ENCODE measurements at regions of chr6 and their contacts with region 1.

Region 1: DNA sequence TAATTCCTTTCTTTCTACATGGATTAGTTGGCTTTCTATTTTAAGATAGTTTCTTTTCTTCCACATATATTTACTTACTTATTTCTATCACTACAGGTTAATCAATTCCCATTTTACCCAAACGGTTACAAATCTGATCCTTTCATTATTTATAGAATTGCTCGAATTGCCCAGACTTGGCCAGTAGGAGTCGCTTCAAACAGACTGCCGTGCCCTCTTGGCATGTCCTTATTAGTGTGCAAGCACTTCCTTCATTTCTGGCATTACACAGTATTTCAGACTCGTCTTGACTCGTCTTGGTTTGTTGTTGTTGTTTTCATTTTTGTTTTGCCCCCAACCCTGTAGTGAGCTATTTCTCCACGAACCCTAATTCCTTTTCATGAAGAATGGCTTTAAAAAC is 74.6 kb downstream of the SAMD3 start:
- DNase-seq: no peak
- ATAC-seq: peak; percentile 91
- H3K4me3 ChIP-seq: no peak overlapping the region
- H3K27ac ChIP-seq: no peak overlapping the region
- H3K4me1 ChIP-seq: no peaks in the 10 kb centered on the region
- H3K27me3 ChIP-seq: no peaks in the 10 kb centered on the region
- CTCF ChIP-seq: peak; percentile 25 to 52 (median 46)
- EP300 ChIP-seq: no peak
- POLR2A ChIP-seq: no peak
- RAD21 ChIP-seq: 0 out of 2 replicates have a peak, but pooled peaks have one; percentile 17

Region 2: GRCh38 chr6:130161683-130162404 is 13.7 kb after region 1 on chr6:
- CTCF ChIA-PET with region 1: interaction called, 10 read pairs
- POLR2A ChIA-PET with region 1: no interaction called
- RAD21 ChIA-PET with region 1: no interaction called
- SMC1A ChIA-PET with region 1: interaction called, 3 read pairs
- in situ Hi-C with region 1: no loop called
- intact Hi-C with region 1: no loop called
- DNase-seq: no peak
- ATAC-seq: peak; percentile 21; the same call in 2 of the 3 replicates
- H3K4me3 ChIP-seq: no peak overlapping the region
- H3K27ac ChIP-seq: no peak overlapping the region
- H3K4me1 ChIP-seq: no peaks in the 10 kb centered on the region
- H3K27me3 ChIP-seq: no peaks in the 10 kb centered on the region; a peak in 1 of 4 replicates
- CTCF ChIP-seq: no peak
- EP300 ChIP-seq: no peak
- POLR2A ChIP-seq: no peak
- RAD21 ChIP-seq: no peak